Astrocyte of the cerebellum (primary cell): ENCODE measurements at regions of chr6 and their contacts with region 1.

Region 1: GRCh38 chr6:30541515-30542403 is 14.5 kb downstream of the GNL1 start:
- DNase-seq: peak; percentile 80
- H3K4me3 ChIP-seq: peak overlapping the region; percentile 11
- CTCF ChIP-seq: peak; percentile 99

Region 2: DNA sequence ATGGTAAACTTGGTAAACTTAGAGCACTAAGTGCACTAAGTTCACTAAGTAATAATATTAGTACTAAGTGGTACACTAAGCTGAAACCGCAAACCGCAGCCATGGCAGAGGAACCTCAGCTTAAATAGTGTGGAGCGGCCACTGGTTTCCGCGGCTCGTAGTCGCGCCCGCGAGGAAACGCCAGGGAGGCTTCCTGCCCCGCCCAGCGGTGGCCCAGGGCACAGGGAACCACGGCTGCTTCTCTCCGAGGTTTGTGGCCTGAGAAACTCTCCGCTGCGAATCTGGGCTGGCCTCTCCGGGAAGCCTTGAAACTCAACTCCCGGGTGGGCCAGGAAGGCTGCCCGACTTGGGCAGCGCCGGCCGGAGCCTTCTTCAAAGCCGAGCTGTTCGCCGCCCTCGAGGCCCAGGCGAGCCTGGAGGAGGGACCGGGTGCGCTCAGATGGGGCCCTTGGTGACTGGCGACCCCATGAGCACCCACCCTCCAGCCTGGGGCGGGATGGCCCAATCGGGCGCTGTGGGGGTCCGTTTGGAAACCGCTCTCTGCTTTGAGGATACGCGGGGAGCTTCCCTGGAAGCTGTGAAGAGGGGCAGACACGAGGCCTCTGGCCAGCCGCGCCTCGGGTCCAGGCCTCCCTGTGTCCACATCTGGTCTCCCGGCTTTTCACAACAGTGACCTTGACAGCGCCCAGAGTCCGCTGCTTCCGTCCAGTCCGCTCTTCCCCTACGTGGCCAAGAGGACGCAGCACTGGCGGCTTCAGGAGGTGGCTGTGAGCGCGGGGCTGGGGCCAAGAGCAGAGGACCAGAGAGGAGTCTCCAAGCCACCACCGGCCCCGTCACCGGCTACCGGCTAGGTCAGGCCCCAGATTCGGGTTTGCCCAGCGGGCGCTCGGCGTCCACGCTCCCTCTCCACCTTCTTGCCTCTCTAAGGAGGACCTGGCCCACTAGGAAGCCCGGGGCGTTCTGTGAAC is 77.8 kb before region 1 on chr6:
- in situ Hi-C with region 1: loop called (anchors 10 kb)
- DNase-seq: no peak
- H3K4me3 ChIP-seq: no peak overlapping the region
- CTCF ChIP-seq: no peak

Region 3: DNA sequence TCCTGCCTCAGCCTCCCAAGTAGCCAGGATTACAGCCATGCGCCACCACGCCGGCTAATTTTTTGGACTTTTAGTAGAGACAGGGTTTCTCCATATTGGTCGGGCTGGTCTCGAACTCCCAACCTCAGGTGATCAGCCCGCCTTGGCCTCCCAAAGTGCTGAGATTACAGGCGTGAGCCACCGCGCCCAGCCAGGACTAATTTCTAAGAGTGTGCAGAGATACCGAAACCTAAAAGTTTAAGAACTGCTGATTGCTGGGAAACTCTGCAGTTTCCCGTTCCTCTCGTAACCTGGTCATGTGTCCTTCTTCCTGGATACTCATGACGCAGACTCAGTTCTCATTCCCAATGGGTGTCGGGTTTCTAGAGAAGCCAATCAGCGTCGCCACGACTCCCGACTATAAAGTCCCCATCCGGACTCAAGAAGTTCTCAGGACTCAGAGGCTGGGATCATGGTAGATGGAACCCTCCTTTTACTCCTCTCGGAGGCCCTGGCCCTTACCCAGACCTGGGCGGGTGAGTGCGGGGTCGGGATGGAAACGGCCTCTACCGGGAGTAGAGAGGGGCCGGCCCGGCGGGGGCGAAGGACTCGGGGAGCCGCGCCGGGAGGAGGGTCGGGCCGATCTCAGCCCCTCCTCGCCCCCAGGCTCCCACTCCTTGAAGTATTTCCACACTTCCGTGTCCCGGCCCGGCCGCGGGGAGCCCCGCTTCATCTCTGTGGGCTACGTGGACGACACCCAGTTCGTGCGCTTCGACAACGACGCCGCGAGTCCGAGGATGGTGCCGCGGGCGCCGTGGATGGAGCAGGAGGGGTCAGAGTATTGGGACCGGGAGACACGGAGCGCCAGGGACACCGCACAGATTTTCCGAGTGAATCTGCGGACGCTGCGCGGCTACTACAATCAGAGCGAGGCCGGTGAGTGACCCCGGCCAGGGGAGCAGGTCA is 52.4 kb before region 1 on chr6 and contains the start of gene HLA-E:
- in situ Hi-C with region 1: loop called (anchors 5 kb)
- DNase-seq: peak; percentile 99
- H3K4me3 ChIP-seq: peak within 1 kb of the TSS; percentile 96
- CTCF ChIP-seq: no peak

Region 4: DNA sequence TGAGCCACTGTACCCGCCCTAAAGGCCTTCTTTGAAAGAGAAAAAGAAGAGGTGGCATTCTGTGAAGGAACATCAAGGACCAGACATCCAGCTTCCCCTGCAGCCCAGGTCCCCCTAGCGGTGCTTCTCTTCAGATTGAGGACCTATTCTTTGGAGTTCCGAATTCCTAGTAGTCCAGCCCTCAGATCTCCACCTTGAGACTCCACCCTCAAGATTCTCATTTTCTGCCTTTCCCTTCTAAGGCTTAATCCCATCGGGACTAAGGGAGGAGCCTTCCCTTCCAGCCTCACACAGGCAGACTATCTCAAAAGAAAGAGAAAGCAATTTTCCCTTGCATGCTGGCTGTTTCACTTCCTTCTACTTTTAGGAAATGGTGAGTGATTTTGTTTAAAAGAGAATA is 501.0 kb after region 1 on chr6:
- in situ Hi-C with region 1: no loop called
- DNase-seq: no peak
- H3K4me3 ChIP-seq: no peak overlapping the region
- CTCF ChIP-seq: peak; percentile 60